ENCODE measurements at regions of chr11 and their contacts with region 1.

Region 1: GRCh38 chr11:107573438-107573837 is 7.9 kb upstream of the ALKBH8 start:
- DNase-seq: no peak
- ATAC-seq: no peak
- H3K4me3 ChIP-seq: no peak overlapping the region
- H3K4me3 Mint-ChIP-seq: no peak overlapping the region
- H3K27ac ChIP-seq: no peak overlapping the region
- H3K27ac Mint-ChIP-seq: no peak overlapping the region
- H3K4me1 ChIP-seq: no peaks in the 10 kb centered on the region
- H3K4me1 Mint-ChIP-seq: no peaks in the 10 kb centered on the region
- H3K27me3 ChIP-seq: peaks cover 0 to 4% of the 10 kb centered on the region in 2 experiments
- H3K27me3 Mint-ChIP-seq: peaks cover 13% of the 10 kb centered on the region
- CTCF ChIP-seq: no peak

Region 2: DNA sequence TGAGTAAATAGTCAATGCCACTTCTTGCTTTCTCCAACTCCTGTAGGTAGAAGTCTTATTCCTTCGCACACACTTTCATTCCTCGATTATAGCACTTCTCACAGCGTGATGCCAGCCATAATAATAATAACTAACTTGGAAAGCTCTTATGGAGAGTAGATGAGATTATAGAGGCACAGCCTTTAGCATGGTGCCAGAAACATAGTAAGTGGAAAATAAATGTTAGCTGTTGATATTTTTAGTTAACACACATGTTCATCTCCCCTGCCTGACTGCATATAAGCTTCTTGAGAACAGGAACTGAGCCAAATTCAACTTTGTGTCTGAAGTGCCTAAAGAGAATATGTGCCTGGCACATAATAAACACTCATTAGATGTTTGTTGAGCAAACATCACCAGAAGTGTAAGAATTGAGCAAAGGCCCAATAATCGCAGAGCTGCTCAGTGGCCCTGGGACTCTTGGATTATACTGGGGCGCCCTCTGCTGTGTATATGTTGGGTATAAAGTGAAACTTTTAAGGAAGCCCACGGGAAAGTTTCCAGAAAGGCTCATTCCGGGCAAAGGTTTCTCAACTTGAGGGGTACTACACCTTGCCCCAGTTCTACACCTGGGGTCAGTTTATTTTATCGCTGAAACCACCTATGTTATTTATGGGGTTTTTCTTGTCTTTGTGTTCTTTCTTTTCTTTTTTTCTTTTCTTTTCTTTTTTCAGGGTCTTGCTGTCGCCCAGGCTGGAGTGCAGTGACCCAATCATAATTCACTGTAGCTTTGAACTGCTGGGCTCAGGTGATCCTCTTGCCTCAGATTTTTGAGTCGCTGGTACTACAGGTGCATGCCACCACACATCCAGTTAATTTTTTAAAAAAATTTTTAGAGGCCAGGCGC is 116.1 kb after region 1 on chr11:
- CTCF ChIA-PET with region 1: interaction called, 3 read pairs
- POLR2A ChIA-PET with region 1: no interaction called
- intact Hi-C with region 1: loop called (anchors 1 kb)
- DNase-seq: peak; percentile 13 to 67 (median 42)
- ATAC-seq: peak; percentile 44
- H3K4me3 ChIP-seq: no peak overlapping the region
- H3K4me3 Mint-ChIP-seq: no peak overlapping the region
- H3K27ac ChIP-seq: no peak overlapping the region
- H3K27ac Mint-ChIP-seq: no peak overlapping the region
- H3K4me1 ChIP-seq: no peaks in the 10 kb centered on the region
- H3K4me1 Mint-ChIP-seq: no peaks in the 10 kb centered on the region
- H3K27me3 ChIP-seq: peaks cover 3 to 15% of the 10 kb centered on the region in 2 experiments
- H3K27me3 Mint-ChIP-seq: peaks cover 29% of the 10 kb centered on the region
- CTCF ChIP-seq: peak; percentile 29

Region 3: DNA sequence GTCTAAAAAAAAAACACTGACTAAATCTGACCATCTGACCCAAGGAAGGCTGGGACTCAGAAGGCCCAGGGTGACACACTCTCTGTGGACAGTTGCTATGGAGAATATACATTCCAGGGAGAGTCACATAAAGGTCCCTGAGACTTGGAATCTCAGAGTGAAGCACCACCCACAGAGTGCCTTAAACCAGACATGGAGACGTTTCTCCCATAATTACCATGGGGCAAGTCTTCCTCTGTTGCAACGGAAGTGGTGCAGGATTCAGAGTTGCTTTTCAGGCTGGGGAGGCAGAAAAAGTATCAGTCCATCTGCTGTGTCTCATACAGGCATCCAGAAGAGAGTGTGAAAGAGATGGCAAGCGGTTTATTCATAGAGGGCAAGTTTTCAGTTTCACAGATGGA is 197.1 kb after region 1 on chr11:
- CTCF ChIA-PET with region 1: interaction called, 5 read pairs
- POLR2A ChIA-PET with region 1: interaction called, 4 read pairs
- intact Hi-C with region 1: loop called (anchors 5 to 10 kb)
- DNase-seq: no peak
- ATAC-seq: no peak
- H3K4me3 ChIP-seq: no peak overlapping the region
- H3K4me3 Mint-ChIP-seq: no peak overlapping the region
- H3K27ac ChIP-seq: no peak overlapping the region
- H3K27ac Mint-ChIP-seq: no peak overlapping the region
- H3K4me1 ChIP-seq: no peaks in the 10 kb centered on the region
- H3K4me1 Mint-ChIP-seq: no peaks in the 10 kb centered on the region
- H3K27me3 ChIP-seq: no peaks in the 10 kb centered on the region
- H3K27me3 Mint-ChIP-seq: peaks cover 8% of the 10 kb centered on the region
- CTCF ChIP-seq: no peak

Region 4: GRCh38 chr11:108654994-108655631 is 1081.7 kb after region 1 on chr11:
- CTCF ChIA-PET with region 1: no interaction called
- POLR2A ChIA-PET with region 1: no interaction called
- intact Hi-C with region 1: loop called in 1 of 2 experiments (anchors 5 kb)
- DNase-seq: peak in 7 of 14 experiments; percentile 4 to 48 (median 30)
- ATAC-seq: no peak
- H3K4me3 ChIP-seq: no peak overlapping the region
- H3K4me3 Mint-ChIP-seq: no peak overlapping the region
- H3K27ac ChIP-seq: no peak overlapping the region
- H3K27ac Mint-ChIP-seq: no peak overlapping the region
- H3K4me1 ChIP-seq: no peaks in the 10 kb centered on the region
- H3K4me1 Mint-ChIP-seq: no peaks in the 10 kb centered on the region
- H3K27me3 ChIP-seq: no peaks in the 10 kb centered on the region
- H3K27me3 Mint-ChIP-seq: no peaks in the 10 kb centered on the region
- CTCF ChIP-seq: peak; percentile 46